Calu3 (cell line): ENCODE measurements at regions of chr15 and their contacts with region 1.

Region 1: DNA sequence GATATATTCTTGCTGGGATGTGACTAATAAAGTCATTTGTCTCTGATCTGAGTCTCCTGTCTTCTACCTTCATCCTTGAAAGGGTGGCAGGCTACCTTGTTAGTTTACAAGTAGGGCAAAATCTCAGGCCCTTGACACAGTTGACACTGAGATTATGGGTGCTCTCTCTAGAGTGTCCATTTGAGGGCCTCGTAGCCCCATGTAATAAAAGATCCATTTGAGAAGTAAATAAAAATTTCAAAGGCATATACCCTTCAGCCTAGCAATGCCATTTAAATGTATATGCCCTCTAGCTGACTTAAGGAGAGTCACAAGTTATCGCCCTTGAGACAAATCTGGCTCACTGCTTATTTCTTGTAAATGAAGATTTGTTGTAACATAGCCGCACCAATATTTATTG is 98.6 kb downstream of the TCF12 start:
- DNase-seq: no peak
- H3K4me3 Mint-ChIP-seq: no peak overlapping the region
- H3K27ac Mint-ChIP-seq: peak overlapping the region; percentile 83
- H3K4me1 Mint-ChIP-seq: peaks cover 79% of the 10 kb centered on the region
- H3K27me3 Mint-ChIP-seq: no peaks in the 10 kb centered on the region
- CTCF ChIP-seq: no peak

Region 2: DNA sequence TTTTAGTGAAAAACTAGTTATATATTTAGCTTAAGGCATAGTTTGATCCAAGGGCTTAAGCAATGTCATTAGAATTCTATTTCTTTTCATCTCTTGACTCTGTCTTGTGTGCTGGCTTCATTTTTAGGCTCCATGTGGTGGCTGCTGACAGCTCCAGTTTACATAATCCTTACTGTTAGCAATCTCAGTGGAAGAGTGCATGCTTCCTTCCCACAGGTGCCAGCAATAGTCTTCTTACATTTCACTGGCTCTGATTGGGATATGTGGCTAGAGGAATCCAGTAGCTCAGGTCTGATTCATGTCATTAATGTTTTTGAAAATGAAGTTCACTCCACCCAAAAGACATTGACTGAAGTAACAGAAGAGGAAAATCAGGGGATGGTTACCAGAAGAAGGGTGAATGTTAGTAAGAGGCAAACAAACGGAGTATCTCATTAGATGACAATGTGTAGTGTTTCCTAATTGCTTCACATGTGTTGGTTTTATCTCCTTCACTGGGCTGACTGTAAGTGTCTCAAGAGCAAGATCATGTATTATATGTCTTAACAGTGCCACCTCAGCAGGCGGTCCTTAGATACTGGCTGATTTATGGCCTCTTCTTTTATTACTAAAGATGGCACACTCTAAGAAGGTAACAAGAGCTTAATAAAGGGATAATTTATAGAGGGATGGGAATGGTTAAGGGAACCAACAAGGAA is 124.2 kb before region 1 on chr15:
- CTCF ChIA-PET with region 1: no interaction called
- intact Hi-C with region 1: no loop called
- DNase-seq: no peak
- H3K4me3 Mint-ChIP-seq: no peak overlapping the region
- H3K27ac Mint-ChIP-seq: no peak overlapping the region
- H3K4me1 Mint-ChIP-seq: peaks cover 17% of the 10 kb centered on the region
- H3K27me3 Mint-ChIP-seq: no peaks in the 10 kb centered on the region
- CTCF ChIP-seq: no peak

Region 3: DNA sequence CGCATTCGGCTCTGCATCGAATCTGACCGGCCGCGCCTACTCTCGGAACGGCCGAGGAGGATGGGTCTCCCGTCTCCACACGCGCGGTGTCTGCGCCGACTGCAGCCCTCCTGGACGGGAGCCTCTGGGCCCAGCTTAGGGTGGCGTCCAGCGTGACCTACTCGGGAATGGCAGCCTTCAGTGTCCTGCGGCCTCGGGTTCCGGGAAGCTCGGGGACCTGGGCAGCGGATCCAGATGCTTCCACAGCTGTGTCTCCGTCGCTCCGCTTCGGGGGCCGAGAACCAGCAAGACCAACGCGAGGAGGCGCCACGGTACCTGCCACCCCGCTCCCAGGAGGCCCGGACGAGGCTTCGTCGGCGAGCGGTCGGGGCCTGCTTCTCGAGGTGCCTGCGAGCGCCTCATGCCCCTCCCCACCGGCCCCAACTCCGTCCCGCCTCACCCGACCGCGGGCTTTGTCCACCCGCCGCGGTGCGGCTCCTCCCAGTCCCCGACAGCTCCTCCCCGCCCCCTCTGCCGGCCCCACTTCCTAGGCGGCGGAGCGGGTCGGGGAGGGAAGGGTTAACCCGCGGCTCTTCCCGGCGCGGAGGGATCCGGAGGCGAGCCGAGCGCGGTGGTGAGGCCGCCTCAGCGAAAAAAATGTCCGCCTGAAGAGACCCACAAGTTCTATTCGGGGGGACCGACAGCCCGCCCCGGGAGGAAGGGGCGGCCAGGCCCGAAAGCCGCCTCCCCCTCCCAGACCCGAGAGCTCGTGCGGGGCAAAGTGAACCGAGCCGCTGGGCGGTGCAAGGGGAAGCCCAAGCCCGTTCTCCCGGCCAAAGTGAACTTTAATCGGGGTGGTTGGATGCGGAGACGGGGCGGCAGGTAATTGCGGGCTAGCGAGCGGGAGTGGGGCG is 98.7 kb before region 1 on chr15 and contains the start of gene TCF12:
- CTCF ChIA-PET with region 1: no interaction called
- intact Hi-C with region 1: loop called (anchors 5 kb)
- DNase-seq: peak; percentile 97
- H3K4me3 Mint-ChIP-seq: peak within 1 kb of the TSS; percentile 98
- H3K27ac Mint-ChIP-seq: peak within 1 kb of the TSS; percentile 98
- H3K4me1 Mint-ChIP-seq: peaks cover 46% of the 10 kb centered on the region
- H3K27me3 Mint-ChIP-seq: no peaks in the 10 kb centered on the region
- CTCF ChIP-seq: peak; percentile 44
- total RNA-seq, gene TCF12: 115 and 127 TPM in 2 replicates

Region 4: DNA sequence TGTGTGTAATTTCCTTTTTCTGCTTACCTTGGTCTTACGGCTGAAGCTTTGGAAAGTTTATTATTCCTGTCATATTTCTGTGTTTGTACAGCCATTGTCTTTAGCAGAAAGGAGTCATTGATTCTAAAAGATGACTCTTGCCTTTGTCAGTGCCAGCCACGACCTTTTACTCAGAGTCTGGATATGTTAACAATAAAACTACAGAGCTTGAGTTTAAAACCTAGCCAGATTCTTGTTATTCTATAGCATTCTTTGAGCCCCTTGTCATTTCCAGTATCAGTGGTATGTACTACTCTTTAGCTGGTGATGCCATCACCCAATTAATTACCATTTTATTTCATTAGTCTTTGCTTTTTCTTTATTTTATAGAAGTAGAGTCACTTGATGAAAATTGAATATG is 43.8 kb after region 1 on chr15:
- CTCF ChIA-PET with region 1: no interaction called
- intact Hi-C with region 1: loop called (anchors 5 kb)
- DNase-seq: peak; percentile 33
- H3K4me3 Mint-ChIP-seq: peak overlapping the region; percentile 20
- H3K27ac Mint-ChIP-seq: peak overlapping the region; percentile 82
- H3K4me1 Mint-ChIP-seq: peaks cover 65% of the 10 kb centered on the region
- H3K27me3 Mint-ChIP-seq: no peaks in the 10 kb centered on the region
- CTCF ChIP-seq: no peak

Region 5: GRCh38 chr15:57118013-57118799 is 101.2 kb after region 1 on chr15:
- CTCF ChIA-PET with region 1: no interaction called
- intact Hi-C with region 1: loop called (anchors 5 kb)
- DNase-seq: peak; percentile 6
- H3K4me3 Mint-ChIP-seq: peak overlapping the region; percentile 15
- H3K27ac Mint-ChIP-seq: peak overlapping the region; percentile 15
- H3K4me1 Mint-ChIP-seq: peaks cover 83% of the 10 kb centered on the region
- H3K27me3 Mint-ChIP-seq: no peaks in the 10 kb centered on the region
- CTCF ChIP-seq: no peak

Region 6: DNA sequence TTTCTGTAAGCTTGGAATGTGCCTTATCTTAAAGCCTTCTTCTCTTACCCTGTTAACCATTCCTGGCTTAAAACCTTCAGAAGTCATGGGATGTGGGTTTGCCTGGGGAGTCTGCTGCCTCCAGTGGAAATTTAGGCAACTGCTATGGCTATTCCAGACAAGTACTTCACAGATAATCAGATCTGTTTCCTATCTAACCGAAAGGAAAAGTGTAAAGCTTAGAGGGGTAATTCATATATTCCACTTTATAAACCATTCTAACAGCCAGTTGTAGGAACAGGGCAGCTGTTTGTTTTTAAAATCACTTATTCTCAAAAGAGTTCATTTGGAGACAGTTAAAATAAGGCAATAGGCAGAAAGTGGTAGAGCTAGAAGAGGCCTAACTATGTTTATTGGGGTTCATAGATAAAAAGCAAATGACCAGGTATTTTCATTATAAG is 121.3 kb after region 1 on chr15:
- CTCF ChIA-PET with region 1: no interaction called
- intact Hi-C with region 1: loop called (anchors 5 kb)
- DNase-seq: peak; percentile 59
- H3K4me3 Mint-ChIP-seq: no peak overlapping the region
- H3K27ac Mint-ChIP-seq: no peak overlapping the region
- H3K4me1 Mint-ChIP-seq: peaks cover 5% of the 10 kb centered on the region
- H3K27me3 Mint-ChIP-seq: no peaks in the 10 kb centered on the region
- CTCF ChIP-seq: peak; percentile 79